Ascending aorta (tissue), 2 donors: ENCODE measurements at regions of chr12 and their contacts with region 1.

Region 1: DNA sequence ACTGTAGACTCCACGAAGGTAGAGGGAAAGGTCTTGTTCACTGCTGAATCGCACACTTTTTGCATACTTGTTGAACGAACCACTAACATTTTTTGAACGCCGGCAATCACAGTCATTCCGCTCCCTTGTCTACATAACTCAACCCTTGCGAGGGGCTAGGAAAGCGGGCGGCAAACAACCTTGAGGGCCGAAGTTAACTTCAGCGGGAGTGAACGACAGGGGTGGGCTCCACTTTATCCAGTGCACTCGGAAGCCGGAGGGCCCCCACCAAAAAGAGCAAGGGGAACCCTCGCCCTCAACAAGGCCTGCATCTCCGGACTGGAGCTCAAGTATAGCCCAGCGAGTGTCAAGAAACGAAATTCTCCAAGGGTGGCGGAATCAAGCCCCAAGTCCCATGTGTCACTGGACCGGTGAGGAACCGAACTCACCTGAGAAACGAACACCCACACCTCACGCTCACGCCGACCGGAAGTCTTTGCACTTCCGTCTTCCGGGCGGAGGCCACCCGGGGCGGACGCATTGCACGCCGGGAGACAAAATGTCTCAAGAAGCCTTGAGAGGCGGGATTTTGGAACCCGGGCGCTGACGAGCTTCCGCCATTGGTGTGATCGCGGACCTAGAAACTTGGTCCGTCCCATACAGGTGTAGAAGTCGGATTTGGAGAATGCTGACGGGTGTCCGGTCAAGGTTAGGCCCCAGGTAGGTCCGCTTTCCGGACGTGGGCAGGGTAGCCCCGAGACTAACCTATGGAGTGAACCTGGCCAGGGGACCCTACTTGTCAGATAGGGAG is at the start of gene LLPH:
- DNase-seq: peak; percentile 53 to 93
- H3K4me3 ChIP-seq: peak within 1 kb of the TSS; percentile 82 to 98
- H3K27ac ChIP-seq: peak within 1 kb of the TSS; percentile 51 to 74
- H3K4me1 ChIP-seq: peaks cover 0 to 6% of the 10 kb centered on the region in 2 donors
- H3K27me3 ChIP-seq: no peaks in the 10 kb centered on the region
- CTCF ChIP-seq: no peak
- total RNA-seq, gene LLPH: 0.21 TPM

Region 2: DNA sequence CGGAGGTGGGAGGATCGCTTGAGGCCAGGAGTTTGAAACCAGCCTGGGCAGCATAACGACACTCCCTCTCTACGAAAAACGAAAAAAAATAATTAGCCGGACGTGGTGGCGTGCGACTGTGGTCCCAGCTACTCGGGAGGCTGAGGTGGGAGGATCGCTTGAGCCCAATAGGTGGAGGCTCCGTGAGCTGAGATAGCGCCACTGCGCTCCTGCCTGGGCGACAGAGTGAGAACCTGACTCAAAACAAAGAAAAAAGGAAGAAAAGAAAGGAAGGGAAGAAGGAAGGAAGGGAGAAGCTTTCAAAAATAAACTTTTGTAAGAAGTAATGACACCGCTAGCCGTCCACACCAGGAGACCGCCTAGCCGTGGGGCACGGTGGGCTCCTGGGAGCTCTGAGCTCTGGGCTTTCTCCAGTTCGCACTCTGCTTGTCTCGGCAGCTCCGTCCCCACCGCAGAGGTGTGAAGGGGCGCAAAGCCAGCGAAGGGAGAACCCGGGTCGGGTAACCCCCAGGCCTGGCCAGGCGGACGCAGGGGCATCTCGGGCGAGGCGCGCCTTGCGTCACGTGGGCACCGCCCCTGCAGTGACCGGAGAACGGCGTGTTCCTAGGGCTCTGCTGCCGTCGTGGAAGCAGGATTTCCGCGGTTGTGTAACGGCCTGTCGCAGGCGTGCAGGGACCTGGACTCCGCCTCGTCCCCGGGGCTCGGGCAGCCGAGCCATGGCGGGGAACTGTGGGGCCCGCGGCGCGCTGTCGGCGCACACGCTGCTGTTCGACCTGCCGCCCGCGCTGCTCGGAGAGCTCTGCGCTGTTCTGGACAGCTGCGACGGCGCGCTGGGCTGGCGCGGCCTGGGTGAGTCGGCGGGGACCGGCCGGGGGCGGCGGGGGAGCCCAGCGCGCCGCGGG is 58.4 kb after region 1 on chr12 and contains the start of gene IRAK3:
- intact Hi-C with region 1: loop called (anchors 5 kb)
- DNase-seq: peak; percentile 65 to 95
- H3K4me3 ChIP-seq: peak within 1 kb of the TSS; percentile 72 to 79
- H3K27ac ChIP-seq: peak within 1 kb of the TSS; percentile 81 to 85
- H3K4me1 ChIP-seq: peaks cover 0 to 5% of the 10 kb centered on the region in 2 donors
- H3K27me3 ChIP-seq: no peaks in the 10 kb centered on the region
- CTCF ChIP-seq: no peak
- total RNA-seq, gene IRAK3: 35.9 TPM